Esophagus muscularis mucosa (tissue), 4 donors: ENCODE measurements at regions of chr7 and their contacts with region 1.

Region 1: GRCh38 chr7:79452032-79452494 is 1.4 kb downstream of the MAGI2 start:
- DNase-seq: peak; percentile 97
- H3K4me3 ChIP-seq: peak overlapping the region; percentile 76 to 81 (median 79)
- H3K27ac ChIP-seq: peak overlapping the region; percentile 94 to 96 (median 95)
- H3K4me1 ChIP-seq: peaks cover 11 to 35% (median 32%) of the 10 kb centered on the region in 4 donors
- H3K27me3 ChIP-seq: no peaks in the 10 kb centered on the region
- CTCF ChIP-seq: no peak
- EP300 ChIP-seq: no peak
- POLR2A ChIP-seq: peak; percentile 60

Region 2: GRCh38 chr7:79308192-79308591 is 143.9 kb before region 1 on chr7:
- intact Hi-C with region 1: loop called (anchors 5 kb)
- DNase-seq: no peak
- H3K4me3 ChIP-seq: no peak overlapping the region
- H3K27ac ChIP-seq: peak overlapping the region in 2 of 4 donors; percentile 18 to 21
- H3K4me1 ChIP-seq: peaks cover 0 to 27% (median 10%) of the 10 kb centered on the region in 4 donors
- H3K27me3 ChIP-seq: no peaks in the 10 kb centered on the region
- CTCF ChIP-seq: peak in 2 of 3 experiments; percentile 10 to 27
- EP300 ChIP-seq: no peak
- POLR2A ChIP-seq: no peak

Region 3: DNA sequence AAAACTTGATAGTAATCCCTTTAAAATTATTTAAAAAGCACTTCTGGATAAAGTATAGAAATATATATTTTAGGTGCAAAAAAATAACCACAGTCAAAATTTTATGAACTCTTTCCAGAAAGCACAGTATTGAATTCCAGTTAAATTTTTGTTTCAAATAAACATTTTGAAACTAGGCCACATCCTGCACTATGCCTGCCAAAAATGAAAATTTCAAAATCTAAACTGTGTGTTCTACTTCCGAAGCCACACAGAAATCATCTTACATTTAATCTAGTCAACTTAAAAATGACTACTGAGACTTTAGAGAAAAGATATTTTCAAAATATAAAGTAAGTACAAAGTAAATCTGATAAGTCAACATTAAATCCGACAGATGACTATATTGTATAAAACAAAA is 48.6 kb before region 1 on chr7:
- intact Hi-C with region 1: loop called (anchors 10 kb)
- DNase-seq: no peak
- H3K4me3 ChIP-seq: no peak overlapping the region
- H3K27ac ChIP-seq: peak overlapping the region; percentile 40 to 63 (median 55)
- H3K4me1 ChIP-seq: peaks cover 0 to 50% (median 40%) of the 10 kb centered on the region in 4 donors
- H3K27me3 ChIP-seq: no peaks in the 10 kb centered on the region
- CTCF ChIP-seq: no peak
- EP300 ChIP-seq: no peak
- POLR2A ChIP-seq: no peak

Region 4: DNA sequence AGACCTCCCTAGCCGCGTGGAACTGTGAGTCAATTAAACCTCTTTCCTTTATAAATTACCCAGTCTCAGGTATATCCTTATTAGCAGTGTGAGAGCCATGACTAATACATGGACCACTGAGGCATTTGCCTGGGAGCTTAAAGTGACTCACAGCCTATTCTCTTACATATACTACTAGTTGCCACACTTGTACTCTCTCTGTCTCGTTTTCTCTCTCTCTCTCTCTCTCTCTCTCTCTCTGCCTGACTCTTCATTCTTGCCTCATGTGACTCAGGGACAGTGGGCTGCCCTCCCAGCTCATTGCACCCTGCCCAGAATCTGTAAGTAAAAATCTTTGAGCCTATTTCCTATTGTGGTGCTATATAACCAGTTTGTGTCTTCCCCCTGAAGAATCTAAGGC is 240.0 kb after region 1 on chr7:
- intact Hi-C with region 1: no loop called
- DNase-seq: no peak
- H3K4me3 ChIP-seq: no peak overlapping the region
- H3K27ac ChIP-seq: no peak overlapping the region
- H3K4me1 ChIP-seq: no peaks in the 10 kb centered on the region
- H3K27me3 ChIP-seq: no peaks in the 10 kb centered on the region
- CTCF ChIP-seq: no peak
- EP300 ChIP-seq: no peak
- POLR2A ChIP-seq: no peak

Region 5: DNA sequence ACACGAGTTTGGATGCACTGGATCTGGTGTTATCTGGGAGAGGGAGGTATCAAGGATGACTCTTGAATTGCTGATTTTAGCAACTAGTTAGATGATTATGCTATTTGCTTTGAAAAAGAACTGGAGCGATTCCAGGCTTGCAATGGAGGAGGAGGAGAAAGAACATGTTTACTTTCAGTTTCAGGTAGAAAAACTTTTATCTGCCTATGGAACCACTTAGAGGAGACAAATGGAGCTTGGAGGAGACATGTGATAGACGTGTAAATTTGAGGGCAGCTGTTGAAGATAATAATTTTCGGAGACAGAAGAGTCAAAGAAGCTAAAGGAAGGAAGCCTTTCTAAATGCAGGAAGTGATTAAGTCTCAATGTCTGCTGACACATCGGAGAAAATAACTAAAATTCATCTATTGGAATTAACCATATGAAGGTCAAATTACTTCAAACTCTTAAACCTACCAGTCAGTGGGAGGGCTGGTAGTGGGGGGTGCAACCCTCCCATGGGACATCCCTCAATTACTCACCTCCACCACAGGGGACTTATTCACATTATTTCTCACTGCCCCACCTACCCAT is 626.2 kb after region 1 on chr7:
- intact Hi-C with region 1: no loop called
- DNase-seq: no peak
- H3K4me3 ChIP-seq: peak overlapping the region; percentile 32 to 42 (median 36)
- H3K27ac ChIP-seq: no peak overlapping the region
- H3K4me1 ChIP-seq: peaks cover 0 to 3% (median 2%) of the 10 kb centered on the region in 4 donors
- H3K27me3 ChIP-seq: no peaks in the 10 kb centered on the region
- CTCF ChIP-seq: no peak
- EP300 ChIP-seq: no peak
- POLR2A ChIP-seq: no peak